AG04450 (cell line): ENCODE measurements at regions of chr1 and their contacts with region 1.

Region 1: GRCh38 chr1:162040681-162041080 is 17.0 kb upstream of the OLFML2B start:
- DNase-seq: no peak
- H3K4me3 ChIP-seq: no peak overlapping the region
- H3K27ac ChIP-seq: no peak overlapping the region
- H3K27me3 ChIP-seq: peaks cover 2% of the 10 kb centered on the region
- CTCF ChIP-seq: peak; percentile 64

Region 2: DNA sequence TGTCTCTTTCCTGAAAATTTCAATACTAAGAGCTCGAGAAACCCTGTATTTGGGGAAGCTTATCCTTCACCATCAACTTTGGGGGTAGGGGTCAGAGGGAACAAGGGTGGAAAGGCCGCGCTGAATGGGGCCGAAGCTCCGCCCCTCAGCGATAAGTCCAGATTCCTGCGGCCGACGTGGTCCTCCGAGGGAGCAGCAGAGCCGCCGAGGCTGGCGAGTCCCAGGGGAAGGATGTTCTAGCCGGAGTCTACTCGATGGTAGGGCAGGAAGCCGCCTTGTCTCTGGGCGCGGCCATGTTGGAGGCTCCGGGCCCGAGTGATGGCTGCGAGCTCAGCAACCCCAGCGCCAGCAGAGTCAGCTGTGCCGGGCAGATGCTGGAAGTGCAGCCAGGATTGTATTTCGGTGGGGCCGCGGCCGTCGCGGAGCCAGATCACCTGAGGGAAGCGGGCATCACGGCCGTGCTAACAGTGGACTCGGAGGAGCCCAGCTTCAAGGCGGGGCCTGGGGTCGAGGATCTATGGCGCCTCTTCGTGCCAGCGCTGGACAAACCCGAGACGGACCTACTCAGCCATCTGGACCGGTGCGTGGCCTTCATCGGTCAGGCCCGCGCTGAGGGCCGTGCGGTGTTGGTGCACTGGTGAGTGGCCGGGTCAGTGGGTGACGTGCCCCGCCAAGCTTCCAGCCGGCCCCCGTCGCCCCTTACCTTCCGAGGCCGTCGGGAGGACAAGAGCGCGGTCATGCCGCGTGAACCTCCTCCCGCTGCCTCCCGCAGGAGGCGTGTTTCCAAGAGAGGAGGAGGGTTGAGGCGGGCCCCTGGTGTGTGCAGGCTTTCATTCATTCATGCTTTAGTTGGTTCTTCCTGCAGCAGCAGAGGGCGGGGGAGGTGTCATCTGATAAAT is 290.9 kb before region 1 on chr1 and contains the start of gene DUSP12:
- CTCF ChIA-PET with region 1: interaction called, 15 read pairs
- POLR2A ChIA-PET with region 1: no interaction called
- DNase-seq: peak; percentile 86
- H3K4me3 ChIP-seq: peak within 1 kb of the TSS; percentile 96
- H3K27ac ChIP-seq: peak within 1 kb of the TSS; percentile 95
- H3K27me3 ChIP-seq: no peaks in the 10 kb centered on the region
- CTCF ChIP-seq: peak; percentile 11; the same call in 1 of the 2 replicates
- polyA plus RNA-seq, gene DUSP12: 34.9 and 41.1 TPM in 2 replicates

Region 3: GRCh38 chr1:161816201-161816600 is 224.5 kb before region 1 on chr1:
- CTCF ChIA-PET with region 1: interaction called, 10 read pairs
- POLR2A ChIA-PET with region 1: no interaction called
- DNase-seq: no peak
- H3K4me3 ChIP-seq: no peak overlapping the region
- H3K27ac ChIP-seq: no peak overlapping the region
- H3K27me3 ChIP-seq: no peaks in the 10 kb centered on the region
- CTCF ChIP-seq: no peak

Region 4: DNA sequence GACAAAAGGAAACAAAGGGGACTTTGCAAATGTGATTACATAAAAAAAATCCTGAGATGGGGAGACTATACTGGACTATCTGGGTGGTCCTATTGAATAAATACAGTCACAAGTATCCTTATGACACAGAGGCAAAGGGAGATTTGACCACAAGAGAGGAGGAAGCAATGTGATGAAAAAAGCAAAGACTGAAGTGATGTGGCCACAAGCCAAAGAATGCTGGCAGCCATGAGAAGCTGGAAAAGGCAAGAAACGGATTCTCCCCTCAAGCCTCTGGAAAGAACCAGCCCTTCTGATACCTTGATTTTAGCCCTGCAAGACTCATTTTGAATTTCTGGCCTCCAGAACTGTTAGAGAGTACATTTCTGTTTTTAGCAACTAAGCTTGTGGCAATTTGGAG is 53.4 kb before region 1 on chr1:
- CTCF ChIA-PET with region 1: no interaction called
- POLR2A ChIA-PET with region 1: no interaction called
- DNase-seq: no peak
- H3K4me3 ChIP-seq: no peak overlapping the region
- H3K27ac ChIP-seq: no peak overlapping the region
- H3K27me3 ChIP-seq: peaks cover 7% of the 10 kb centered on the region
- CTCF ChIP-seq: no peak

Region 5: DNA sequence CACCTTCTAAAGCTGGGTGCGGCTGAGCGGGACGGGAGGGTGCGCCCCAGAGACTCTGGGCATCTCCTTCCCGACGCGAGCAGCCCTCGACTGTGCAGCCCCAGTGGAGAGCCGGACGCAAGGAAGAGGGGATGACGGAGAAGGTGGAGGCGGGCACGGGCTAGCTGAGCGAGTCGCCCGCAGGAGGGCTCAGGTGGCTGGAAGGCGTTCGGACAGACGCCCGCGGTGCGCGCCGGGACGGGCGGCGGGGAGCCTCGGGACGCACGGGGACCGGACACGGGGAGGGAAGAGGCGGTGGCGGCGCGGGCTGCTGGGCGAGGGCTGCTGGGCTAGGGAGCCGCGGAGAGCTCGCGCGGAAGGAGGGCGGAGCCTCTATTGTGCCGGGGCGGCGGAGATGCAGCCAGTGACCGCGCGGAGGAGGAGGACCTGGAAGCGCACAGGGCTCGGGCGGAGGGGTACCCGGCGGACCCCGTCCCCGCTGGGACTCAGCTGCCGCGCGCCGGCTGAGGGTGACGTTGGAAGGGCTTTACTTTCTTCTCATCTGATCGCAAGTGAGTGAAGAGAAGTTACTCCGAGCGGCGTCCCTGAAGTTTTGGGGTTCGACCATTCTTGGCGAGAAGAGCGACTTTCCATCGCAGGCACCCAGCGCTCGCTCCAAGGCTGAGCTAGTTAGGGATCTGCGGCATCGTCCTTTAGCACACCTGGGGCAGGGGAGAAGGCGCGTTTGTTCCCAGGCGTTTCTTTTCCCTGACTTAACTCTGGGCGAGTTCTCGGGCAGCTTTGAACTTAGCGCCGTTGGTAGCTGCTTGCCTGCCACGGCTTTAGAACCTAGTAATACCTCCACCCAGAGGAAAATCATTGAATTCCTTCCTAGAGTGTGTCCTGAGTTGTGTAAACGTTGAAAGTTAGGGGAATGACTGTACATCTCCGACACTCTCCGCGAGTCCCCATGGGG is 16.9 kb before region 1 on chr1 and contains the start of gene OLFML2B:
- CTCF ChIA-PET with region 1: interaction called, 67 read pairs
- POLR2A ChIA-PET with region 1: no interaction called
- DNase-seq: peak; percentile 37
- H3K4me3 ChIP-seq: peak within 1 kb of the TSS; percentile 82
- H3K27ac ChIP-seq: peak within 1 kb of the TSS; percentile 31
- H3K27me3 ChIP-seq: peaks cover 2% of the 10 kb centered on the region
- CTCF ChIP-seq: peak; percentile 54
- polyA plus RNA-seq, gene OLFML2B: 0.68 and 1.2 TPM in 2 replicates

Region 6: GRCh38 chr1:162062542-162063015 is 21.9 kb after region 1 on chr1:
- CTCF ChIA-PET with region 1: interaction called, 13 read pairs
- POLR2A ChIA-PET with region 1: no interaction called
- DNase-seq: peak; percentile 21
- H3K4me3 ChIP-seq: no peak overlapping the region
- H3K27ac ChIP-seq: no peak overlapping the region
- H3K27me3 ChIP-seq: peaks cover 20% of the 10 kb centered on the region
- CTCF ChIP-seq: no peak